Activated CD8-positive, alpha-beta T cell treated with anti-CD3 and anti-CD28 coated beads, Interleukin-2, amount 10 ng/mL, durations not matched to agents 7 days and 5 days (primary cell): ENCODE measurements at regions of chr1 and their contacts with region 1.

Region 1: DNA sequence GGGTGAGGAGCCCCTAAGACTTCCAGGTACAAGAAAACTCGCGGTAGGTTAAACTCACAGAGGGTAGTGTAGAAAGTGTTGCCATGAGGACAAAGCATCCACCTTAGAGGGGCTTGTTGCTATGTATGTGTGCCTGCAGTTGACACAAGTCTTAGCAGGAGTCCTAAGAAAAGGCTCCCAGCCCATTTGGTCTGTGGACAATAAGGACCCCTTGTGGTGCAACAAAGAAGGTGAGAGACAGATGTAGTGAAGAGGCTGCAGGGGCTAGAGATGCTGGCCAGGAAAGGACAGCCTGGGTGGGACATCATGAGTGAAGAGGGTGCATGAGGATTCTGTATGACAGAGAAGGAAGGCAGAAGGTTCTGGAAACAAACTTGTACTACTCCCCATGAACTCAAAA is 36.3 kb upstream of the IL10 start:
- DNase-seq: peak; percentile 73
- ATAC-seq: peak; percentile 86
- H3K4me3 Mint-ChIP-seq: no peak overlapping the region
- H3K27ac Mint-ChIP-seq: peak overlapping the region; percentile 7
- H3K4me1 Mint-ChIP-seq: peaks cover 49% of the 10 kb centered on the region
- H3K27me3 Mint-ChIP-seq: no peaks in the 10 kb centered on the region

Region 2: GRCh38 chr1:206635080-206635977 is 173.3 kb before region 1 on chr1 and contains the start of gene DYRK3:
- CTCF ChIA-PET with region 1: interaction called, 28 read pairs
- POLR2A ChIA-PET with region 1: no interaction called
- DNase-seq: peak; percentile 95
- ATAC-seq: peak; percentile 95
- H3K4me3 Mint-ChIP-seq: peak within 1 kb of the TSS; percentile 80
- H3K27ac Mint-ChIP-seq: peak within 1 kb of the TSS; percentile 83
- H3K4me1 Mint-ChIP-seq: peaks cover 27% of the 10 kb centered on the region
- H3K27me3 Mint-ChIP-seq: peaks cover 17% of the 10 kb centered on the region
- total RNA-seq, gene DYRK3: 5.3 to 5.9 TPM

Region 3: GRCh38 chr1:206716870-206717673 is 91.5 kb before region 1 on chr1:
- CTCF ChIA-PET with region 1: interaction called, 724 read pairs
- POLR2A ChIA-PET with region 1: no interaction called
- DNase-seq: peak; percentile 52
- ATAC-seq: peak; percentile 67
- H3K4me3 Mint-ChIP-seq: peak overlapping the region; percentile 26
- H3K27ac Mint-ChIP-seq: peak overlapping the region; percentile 75
- H3K4me1 Mint-ChIP-seq: peaks cover 69% of the 10 kb centered on the region
- H3K27me3 Mint-ChIP-seq: no peaks in the 10 kb centered on the region

Region 4: DNA sequence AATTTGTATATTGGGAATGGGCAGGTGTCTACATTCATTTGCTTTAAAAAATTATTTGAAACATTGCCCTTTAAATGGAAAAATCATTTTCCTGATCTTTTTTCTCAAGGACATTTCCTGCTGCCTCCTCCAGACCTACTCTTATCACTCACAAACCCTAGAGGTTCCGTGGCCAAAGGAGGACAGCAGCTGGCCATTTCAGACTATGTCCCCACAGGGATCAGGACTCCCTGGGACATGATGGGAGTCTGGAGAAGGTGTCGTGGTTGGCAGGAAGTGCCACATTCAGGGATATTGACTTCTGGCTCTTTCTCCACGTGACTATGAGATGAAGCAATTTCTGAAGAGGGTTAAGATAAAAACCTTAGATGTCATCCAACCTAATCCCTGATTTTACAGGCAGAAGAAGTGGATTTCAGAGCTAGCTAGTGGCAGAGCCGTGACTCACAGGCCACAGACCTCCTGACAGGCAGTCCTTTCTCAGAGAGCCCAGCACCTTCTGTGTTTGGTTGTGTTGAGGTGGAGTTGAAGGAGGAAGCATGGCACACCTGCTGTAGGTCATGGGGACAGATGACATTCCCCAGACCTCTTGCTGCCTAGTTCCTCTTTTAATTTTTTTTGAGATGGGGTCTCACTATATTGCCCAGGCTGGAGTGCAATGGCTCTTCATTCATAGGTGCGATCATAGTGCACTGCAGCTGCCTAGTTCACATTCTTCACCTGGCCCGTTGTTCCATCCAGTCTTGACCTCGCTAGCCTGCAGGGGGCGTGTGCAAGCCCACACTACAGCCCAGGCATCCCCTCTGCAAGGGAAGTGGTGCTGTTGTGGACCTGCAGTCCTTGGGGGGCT is 10.9 kb before region 1 on chr1:
- CTCF ChIA-PET with region 1: interaction called, 22 read pairs
- POLR2A ChIA-PET with region 1: interaction called, 3 read pairs
- DNase-seq: peak; percentile 45
- ATAC-seq: no peak
- H3K4me3 Mint-ChIP-seq: no peak overlapping the region
- H3K27ac Mint-ChIP-seq: no peak overlapping the region
- H3K4me1 Mint-ChIP-seq: peaks cover 51% of the 10 kb centered on the region
- H3K27me3 Mint-ChIP-seq: peaks cover 34% of the 10 kb centered on the region

Region 5: DNA sequence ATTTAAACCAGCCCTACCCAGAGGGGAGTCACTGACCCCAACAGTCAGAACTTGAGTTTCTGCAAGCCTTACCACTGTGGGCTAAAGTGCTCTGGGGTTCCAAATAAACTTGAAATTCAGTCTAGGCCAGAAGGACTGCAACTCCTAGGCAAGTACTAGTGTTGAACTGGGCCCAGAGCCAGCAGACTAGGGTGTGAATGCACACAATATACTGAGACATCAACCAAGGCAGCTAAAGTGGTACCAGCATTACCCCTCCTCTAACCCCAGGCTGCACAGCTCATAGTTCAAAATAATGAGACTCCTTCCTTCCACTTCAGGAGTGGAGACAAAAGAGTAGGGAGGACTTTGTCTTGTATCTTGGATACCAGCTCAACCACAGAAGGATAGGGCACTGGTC is 37.9 kb after region 1 on chr1:
- CTCF ChIA-PET with region 1: interaction called, 10 read pairs
- POLR2A ChIA-PET with region 1: no interaction called
- DNase-seq: no peak
- ATAC-seq: no peak
- H3K4me3 Mint-ChIP-seq: no peak overlapping the region
- H3K27ac Mint-ChIP-seq: no peak overlapping the region
- H3K4me1 Mint-ChIP-seq: no peaks in the 10 kb centered on the region
- H3K27me3 Mint-ChIP-seq: peaks cover 18% of the 10 kb centered on the region

Region 6: DNA sequence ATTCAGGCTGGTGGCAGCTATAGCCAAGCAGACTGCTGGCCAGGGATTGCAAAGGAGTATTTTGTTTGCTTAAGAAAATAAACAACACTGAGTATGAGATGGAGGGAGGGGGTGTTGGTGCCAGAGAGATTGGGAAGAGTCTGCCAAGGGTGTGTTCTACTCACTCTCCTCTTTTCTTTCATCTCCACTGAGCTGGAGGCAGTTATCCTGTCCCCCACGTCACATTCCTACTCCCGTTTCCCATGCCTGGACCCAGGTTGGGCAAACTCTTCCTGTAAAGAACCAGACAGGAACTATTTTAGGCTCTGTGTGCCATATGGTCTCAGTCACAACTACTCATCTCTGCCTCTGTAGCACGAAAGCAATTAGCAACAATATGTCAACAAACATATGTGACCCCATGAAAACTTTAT is 87.2 kb after region 1 on chr1:
- CTCF ChIA-PET with region 1: interaction called, 11 read pairs
- POLR2A ChIA-PET with region 1: interaction called, 4 read pairs
- DNase-seq: peak; percentile 9
- ATAC-seq: no peak
- H3K4me3 Mint-ChIP-seq: no peak overlapping the region
- H3K27ac Mint-ChIP-seq: no peak overlapping the region
- H3K4me1 Mint-ChIP-seq: peaks cover 10% of the 10 kb centered on the region
- H3K27me3 Mint-ChIP-seq: peaks cover 2% of the 10 kb centered on the region

Region 7: DNA sequence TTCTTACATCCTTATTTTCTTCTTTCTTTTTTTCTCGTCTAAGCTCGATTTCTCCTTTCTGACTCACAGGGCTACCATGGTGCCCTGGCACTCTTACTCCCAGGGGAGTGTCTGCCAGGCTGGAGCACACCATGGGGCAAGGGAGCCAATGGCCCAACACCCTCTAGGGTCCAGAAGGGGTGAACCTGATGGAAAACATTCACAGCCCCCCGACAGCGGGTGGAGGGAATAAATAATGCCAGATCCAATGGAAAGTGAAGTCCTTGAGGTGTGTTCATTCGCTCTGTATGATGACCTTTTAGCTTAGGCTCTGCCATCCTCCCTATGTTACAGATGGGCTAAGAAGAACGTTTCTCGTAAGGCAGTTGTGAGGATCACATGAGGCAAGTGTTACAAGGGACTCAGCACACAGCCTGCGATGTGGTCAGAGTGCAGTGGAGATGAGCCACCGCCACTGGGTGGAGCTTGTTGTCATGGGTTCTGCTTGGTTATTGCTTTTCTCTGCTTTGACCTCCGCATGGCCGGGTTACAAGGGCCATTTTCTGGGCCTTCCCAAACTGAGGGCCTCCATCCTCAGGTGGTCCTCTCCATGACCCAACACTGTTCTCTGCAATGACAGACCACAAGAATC is 116.6 kb after region 1 on chr1:
- CTCF ChIA-PET with region 1: interaction called, 59 read pairs
- POLR2A ChIA-PET with region 1: interaction called, 3 read pairs
- DNase-seq: peak; percentile 86
- ATAC-seq: peak; percentile 72
- H3K4me3 Mint-ChIP-seq: no peak overlapping the region
- H3K27ac Mint-ChIP-seq: no peak overlapping the region
- H3K4me1 Mint-ChIP-seq: peaks cover 29% of the 10 kb centered on the region
- H3K27me3 Mint-ChIP-seq: no peaks in the 10 kb centered on the region

Region 8: DNA sequence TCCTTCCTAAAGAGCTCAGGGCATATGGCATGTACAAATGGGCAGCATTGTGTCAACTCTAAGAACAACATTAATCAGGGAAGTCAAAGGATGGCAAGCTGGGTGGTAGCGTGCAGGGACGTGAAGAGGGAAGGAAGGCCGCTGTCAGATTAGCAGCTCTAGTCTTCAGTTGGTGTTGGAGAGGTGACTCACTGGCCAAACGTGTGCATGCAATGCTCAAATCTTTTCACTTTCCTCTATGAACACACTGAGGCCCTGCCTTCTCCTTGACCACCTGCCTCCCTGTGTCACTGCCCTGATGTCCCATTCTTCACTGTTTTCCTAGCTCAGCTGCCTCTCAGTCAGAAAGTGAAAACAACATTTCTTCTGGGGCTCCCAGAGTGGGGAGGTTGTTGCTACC is 143.6 kb after region 1 on chr1:
- CTCF ChIA-PET with region 1: no interaction called
- POLR2A ChIA-PET with region 1: no interaction called
- DNase-seq: no peak
- ATAC-seq: no peak
- H3K4me3 Mint-ChIP-seq: no peak overlapping the region
- H3K27ac Mint-ChIP-seq: no peak overlapping the region
- H3K4me1 Mint-ChIP-seq: peaks cover 13% of the 10 kb centered on the region
- H3K27me3 Mint-ChIP-seq: peaks cover 12% of the 10 kb centered on the region

Region 9: DNA sequence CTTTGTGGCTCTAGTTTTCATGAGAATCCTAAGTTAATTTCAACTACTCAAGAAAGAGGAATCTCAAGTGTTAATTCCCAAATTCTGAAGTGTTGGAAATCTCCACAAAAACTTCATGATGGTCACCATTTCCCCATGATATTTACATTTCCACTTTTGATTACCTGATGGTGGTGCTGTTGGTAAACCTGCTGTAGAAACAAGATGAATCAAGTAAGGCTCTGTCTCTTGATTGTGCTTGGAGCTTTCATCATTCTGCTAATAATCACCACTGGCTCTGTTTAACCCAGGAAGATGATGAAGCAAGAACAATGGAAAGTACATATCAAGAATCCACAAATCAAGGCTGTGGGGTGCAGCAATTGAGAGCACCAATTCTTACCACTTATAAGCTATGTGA is 373.2 kb after region 1 on chr1:
- CTCF ChIA-PET with region 1: no interaction called
- POLR2A ChIA-PET with region 1: no interaction called
- DNase-seq: no peak
- ATAC-seq: no peak
- H3K4me3 Mint-ChIP-seq: no peak overlapping the region
- H3K27ac Mint-ChIP-seq: no peak overlapping the region
- H3K4me1 Mint-ChIP-seq: no peaks in the 10 kb centered on the region
- H3K27me3 Mint-ChIP-seq: peaks cover 1% of the 10 kb centered on the region